ENCODE measurements at regions of chr2 and their contacts with region 1.

Region 1: GRCh38 chr2:97806738-97807618 is 93.6 kb downstream of the ZAP70 start:
- DNase-seq: peak; percentile 61
- H3K4me3 Mint-ChIP-seq: no peak overlapping the region
- H3K27ac Mint-ChIP-seq: no peak overlapping the region
- H3K4me1 Mint-ChIP-seq: peaks cover 6% of the 10 kb centered on the region
- H3K27me3 Mint-ChIP-seq: no peaks in the 10 kb centered on the region

Region 2: GRCh38 chr2:96895726-96896651 is 911.0 kb before region 1 on chr2:
- intact Hi-C with region 1: no loop called
- DNase-seq: no peak
- H3K4me3 Mint-ChIP-seq: no peak overlapping the region
- H3K27ac Mint-ChIP-seq: no peak overlapping the region
- H3K4me1 Mint-ChIP-seq: peaks cover 25% of the 10 kb centered on the region
- H3K27me3 Mint-ChIP-seq: no peaks in the 10 kb centered on the region

Region 3: DNA sequence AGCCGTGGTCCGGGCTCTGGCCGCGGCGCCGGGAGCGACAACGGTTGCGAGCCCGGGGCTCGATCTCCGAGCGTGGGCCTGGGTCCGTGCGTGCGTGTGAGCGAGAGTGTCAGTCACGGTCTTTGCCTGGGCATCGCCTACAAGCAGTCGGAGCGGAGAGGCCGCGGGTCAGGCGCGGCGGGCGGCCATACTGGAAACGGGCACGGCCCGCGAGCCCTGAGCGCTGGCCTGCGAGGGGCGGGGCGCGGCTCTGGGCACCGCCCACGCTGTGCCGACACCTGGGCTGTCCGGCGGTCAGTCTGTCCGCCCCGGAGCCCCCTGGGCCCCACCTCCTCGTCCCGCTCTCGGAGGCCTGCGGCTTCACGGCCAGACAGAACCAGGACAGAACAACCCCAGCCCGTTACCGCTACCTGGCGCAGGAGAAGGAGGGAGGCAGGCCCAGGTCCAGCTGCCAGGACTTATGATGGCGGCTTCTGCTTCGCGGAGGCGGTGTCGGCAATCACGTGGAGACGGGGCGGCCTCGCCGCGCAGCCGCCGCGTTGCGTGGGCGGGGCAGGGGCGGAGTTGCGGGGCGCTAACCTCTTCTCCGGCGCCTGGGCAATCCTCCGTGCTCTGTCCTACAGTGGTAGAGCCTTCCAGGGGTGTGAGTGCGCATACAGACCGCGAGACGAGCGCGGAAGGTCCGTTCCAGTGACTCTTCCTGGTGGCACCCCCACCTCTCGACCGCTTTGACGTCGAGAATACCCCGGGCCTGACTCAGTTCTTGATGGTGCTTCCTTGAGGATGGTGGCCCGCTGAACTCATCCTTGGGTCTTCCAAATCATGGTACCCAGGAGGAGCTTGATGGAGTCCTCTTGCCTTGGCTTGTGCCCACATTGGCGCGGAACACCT is 189.0 kb after region 1 on chr2 and contains the start of gene TMEM131:
- intact Hi-C with region 1: loop called (anchors 5 kb)
- DNase-seq: peak; percentile 95
- H3K4me3 Mint-ChIP-seq: peak within 1 kb of the TSS; percentile 96
- H3K27ac Mint-ChIP-seq: peak within 1 kb of the TSS; percentile 96
- H3K4me1 Mint-ChIP-seq: peaks cover 30% of the 10 kb centered on the region
- H3K27me3 Mint-ChIP-seq: peaks cover 8% of the 10 kb centered on the region
- total RNA-seq, gene TMEM131: 39.3 and 39.9 TPM in 2 replicates

Region 4: DNA sequence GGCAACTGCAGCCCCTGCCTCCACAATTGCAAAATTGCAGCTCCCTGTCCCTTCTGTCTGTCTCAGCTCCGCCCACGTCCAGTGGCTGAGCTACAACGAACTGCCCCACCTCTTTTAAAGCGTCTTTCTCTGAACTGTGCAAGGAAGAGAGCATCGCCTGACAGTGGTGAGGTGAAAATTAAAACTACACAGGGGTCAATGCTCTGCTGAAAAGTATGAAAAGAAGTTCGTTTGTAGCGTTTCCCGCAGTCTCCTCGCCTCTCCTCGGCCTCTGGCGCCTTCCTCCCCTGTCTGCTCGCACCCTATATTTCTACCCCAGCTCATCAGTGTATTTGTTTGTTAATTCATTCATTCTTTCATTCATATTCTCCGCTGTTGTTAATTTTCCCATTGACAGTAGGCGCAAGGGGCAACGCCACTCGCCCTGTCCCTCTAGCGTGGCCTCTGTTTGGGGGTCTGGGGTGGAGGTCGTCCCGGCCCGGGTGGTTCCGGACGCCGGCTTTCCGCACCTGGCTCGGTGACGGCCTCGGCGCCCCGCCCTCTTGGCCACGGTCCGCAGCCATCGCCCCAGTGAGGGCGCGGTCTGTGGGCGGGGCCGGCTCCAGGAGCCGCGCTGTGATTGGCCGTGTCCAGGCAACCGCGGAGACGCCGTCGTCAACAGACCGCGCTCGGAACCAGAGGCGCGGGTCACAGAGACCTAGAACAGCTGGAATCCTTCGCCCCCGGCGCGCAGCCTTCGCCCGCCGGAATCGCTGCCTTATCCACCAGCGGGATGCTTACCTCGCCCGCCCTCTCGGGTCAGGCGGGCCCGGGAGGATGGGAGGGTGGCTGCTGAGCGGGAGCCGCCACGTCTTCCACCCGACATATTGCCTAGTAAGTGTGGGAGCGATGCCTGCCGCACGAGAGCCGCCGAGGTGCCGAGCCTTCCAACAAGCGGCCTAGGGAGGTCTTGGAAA is 279.8 kb after region 1 on chr2 and contains the start of gene VWA3B:
- intact Hi-C with region 1: loop called (anchors 5 kb)
- DNase-seq: peak; percentile 56
- H3K4me3 Mint-ChIP-seq: peak within 1 kb of the TSS; percentile 73
- H3K27ac Mint-ChIP-seq: no peak within 1 kb of the TSS
- H3K4me1 Mint-ChIP-seq: peaks cover 24% of the 10 kb centered on the region
- H3K27me3 Mint-ChIP-seq: peaks cover 44% of the 10 kb centered on the region
- total RNA-seq, gene VWA3B: not detected in 2 replicates

Region 5: DNA sequence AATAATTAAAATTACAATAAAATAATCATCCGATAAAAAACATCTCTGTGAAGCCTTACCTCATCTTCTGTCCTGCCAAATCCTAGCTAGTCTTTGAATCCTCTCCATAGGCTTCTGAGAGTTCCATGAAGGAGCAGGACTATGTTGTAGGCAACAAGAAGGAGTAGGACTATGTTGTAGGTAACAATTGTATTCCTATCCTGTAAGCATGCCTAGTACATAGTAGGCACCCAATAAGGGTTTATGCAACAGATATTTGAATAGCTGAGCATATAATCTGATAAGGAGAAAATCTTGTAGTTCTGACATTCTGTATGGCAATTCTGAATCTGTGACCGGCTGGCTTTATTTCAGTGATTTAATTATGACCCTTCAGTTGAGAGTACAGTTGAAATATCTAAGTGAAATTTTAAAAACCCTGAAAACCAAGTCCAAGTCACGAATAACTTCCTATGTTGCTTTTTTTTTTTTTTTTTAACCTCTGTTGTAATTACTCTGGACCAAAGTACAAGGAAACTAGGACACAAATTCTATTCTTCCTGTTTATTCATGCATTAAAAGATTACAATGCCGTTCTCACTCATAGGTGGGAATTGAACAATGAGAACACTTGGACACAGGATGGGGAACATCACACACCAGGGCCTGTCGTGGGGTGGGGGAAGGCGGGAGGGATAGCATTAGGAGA is 307.8 kb after region 1 on chr2:
- intact Hi-C with region 1: no loop called
- DNase-seq: no peak
- H3K4me3 Mint-ChIP-seq: no peak overlapping the region
- H3K27ac Mint-ChIP-seq: no peak overlapping the region
- H3K4me1 Mint-ChIP-seq: no peaks in the 10 kb centered on the region
- H3K27me3 Mint-ChIP-seq: peaks cover 33% of the 10 kb centered on the region

Region 6: DNA sequence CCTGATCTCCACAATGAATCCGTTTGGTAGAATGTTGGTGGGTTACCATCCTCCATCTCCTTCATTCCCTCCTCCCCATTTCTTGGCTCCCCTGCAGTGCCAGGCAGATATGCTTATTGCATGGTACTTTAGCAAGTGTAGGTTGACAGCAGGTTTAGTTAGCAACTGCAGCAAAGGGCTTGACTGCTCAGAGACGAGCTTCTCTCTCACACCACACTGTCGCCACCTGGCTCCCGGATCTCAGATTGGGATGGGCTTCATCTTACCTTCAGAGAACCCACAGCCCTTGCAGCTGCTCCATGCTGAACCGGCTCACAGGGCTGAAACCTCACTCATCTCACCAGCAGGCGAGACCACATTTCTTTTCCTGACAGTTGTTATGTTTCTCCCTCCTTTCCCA is 368.8 kb after region 1 on chr2:
- intact Hi-C with region 1: loop called (anchors 5 kb)
- DNase-seq: no peak
- H3K4me3 Mint-ChIP-seq: no peak overlapping the region
- H3K27ac Mint-ChIP-seq: no peak overlapping the region
- H3K4me1 Mint-ChIP-seq: no peaks in the 10 kb centered on the region
- H3K27me3 Mint-ChIP-seq: peaks cover 48% of the 10 kb centered on the region

Region 7: GRCh38 chr2:98269274-98269673 is 462.3 kb after region 1 on chr2:
- intact Hi-C with region 1: loop called (anchors 2 kb)
- DNase-seq: no peak
- H3K4me3 Mint-ChIP-seq: no peak overlapping the region
- H3K27ac Mint-ChIP-seq: no peak overlapping the region
- H3K4me1 Mint-ChIP-seq: no peaks in the 10 kb centered on the region
- H3K27me3 Mint-ChIP-seq: peaks cover 4% of the 10 kb centered on the region

Region 8: GRCh38 chr2:98385050-98385699 is 578.2 kb after region 1 on chr2:
- intact Hi-C with region 1: loop called (anchors 1 kb)
- DNase-seq: peak; percentile 64
- H3K4me3 Mint-ChIP-seq: no peak overlapping the region
- H3K27ac Mint-ChIP-seq: no peak overlapping the region
- H3K4me1 Mint-ChIP-seq: peaks cover 3% of the 10 kb centered on the region
- H3K27me3 Mint-ChIP-seq: peaks cover 5% of the 10 kb centered on the region